Activated CD8-positive, alpha-beta T cell treated with anti-CD3 and anti-CD28 coated beads, Interleukin-2, amount 10 ng/mL, durations not matched to agents 7 days and 5 days (primary cell): ENCODE measurements at regions of chr2 and their contacts with region 1.

Region 1: GRCh38 chr2:30336978-30337841 is 105.9 kb downstream of the LBH start:
- DNase-seq: peak; percentile 76
- ATAC-seq: peak; percentile 94
- H3K4me3 Mint-ChIP-seq: peak overlapping the region; percentile 71
- H3K27ac Mint-ChIP-seq: peak overlapping the region; percentile 97
- H3K4me1 Mint-ChIP-seq: peaks cover 69% of the 10 kb centered on the region
- H3K27me3 Mint-ChIP-seq: no peaks in the 10 kb centered on the region

Region 2: DNA sequence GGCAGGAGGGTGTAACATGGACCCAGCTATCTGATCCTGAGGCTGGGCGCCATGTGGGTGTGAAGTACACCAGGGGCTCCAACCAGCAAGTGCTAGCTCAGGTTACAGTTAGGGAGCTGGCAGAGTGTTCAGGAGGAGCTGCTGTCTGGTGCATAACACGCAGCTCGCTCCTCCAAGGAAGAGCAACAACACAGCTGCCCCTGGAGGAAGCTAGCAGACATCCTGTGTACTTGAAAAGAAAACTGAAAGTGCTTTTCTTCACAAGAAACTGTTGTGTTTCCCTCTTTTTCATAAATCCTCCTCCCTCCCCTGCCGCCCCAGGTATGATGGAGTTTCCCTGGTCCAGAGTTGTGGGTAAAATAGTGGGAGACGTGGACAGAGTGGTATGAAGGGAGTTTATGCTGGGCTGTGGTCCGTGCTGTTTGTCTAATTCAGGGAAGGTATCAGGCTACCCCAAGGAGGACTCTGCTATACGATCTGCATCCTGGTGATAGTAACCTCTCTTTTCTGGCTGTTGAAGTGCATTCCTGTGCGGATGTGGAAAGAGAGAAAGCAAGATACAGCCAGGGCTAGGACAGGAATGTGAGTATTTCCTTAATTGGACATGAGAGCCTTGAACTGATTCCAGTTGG is 112.0 kb before region 1 on chr2:
- CTCF ChIA-PET with region 1: interaction called, 13 read pairs
- POLR2A ChIA-PET with region 1: interaction called, 4 read pairs
- DNase-seq: peak; percentile 70
- ATAC-seq: peak; percentile 88
- H3K4me3 Mint-ChIP-seq: peak overlapping the region; percentile 97
- H3K27ac Mint-ChIP-seq: peak overlapping the region; percentile 99
- H3K4me1 Mint-ChIP-seq: peaks cover 68% of the 10 kb centered on the region
- H3K27me3 Mint-ChIP-seq: peaks cover 2% of the 10 kb centered on the region

Region 3: DNA sequence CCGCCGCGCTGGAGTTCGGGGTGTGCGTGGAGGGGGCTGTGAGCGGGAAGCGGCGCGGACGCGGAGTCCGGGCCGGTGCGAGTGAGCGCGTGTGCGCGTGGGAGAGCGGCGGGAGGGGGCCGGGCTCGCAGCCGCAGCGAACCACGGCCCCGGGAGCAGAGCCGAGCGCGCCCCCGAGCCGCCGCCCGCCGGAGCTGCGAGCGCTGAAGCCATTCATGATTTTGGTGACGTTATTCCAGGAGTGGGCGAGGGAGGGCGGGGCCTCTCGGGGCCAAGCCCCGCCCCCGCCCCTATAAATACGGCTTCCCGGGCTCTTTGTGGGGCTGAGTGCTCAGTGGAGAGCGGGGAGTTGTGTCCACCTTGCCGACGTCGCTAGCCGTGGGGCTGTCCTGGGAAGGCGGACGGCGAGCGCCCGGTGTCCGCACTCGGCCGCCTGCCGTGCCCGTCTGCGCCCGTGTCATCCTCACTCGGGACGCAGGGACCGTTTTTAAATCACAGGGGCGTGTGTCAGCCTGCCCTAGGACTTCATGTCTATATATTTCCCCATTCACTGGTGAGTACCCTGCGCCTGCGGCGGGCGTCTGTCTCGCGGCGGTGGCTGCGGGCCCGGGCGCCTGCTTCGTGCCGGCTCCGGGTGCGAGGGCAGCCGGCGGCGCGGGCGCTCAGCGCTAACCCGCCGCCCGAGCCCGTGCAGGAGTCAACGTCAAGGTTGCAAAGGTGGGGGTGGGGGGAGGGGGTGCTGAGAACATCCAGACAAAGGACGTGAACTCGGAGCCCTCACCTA is 105.8 kb before region 1 on chr2 and contains the start of gene LBH:
- CTCF ChIA-PET with region 1: interaction called, 34 read pairs
- POLR2A ChIA-PET with region 1: interaction called, 13 read pairs
- DNase-seq: peak; percentile 89
- ATAC-seq: peak; percentile 52
- H3K4me3 Mint-ChIP-seq: peak within 1 kb of the TSS; percentile 73
- H3K27ac Mint-ChIP-seq: peak within 1 kb of the TSS; percentile 93
- H3K4me1 Mint-ChIP-seq: peaks cover 64% of the 10 kb centered on the region
- H3K27me3 Mint-ChIP-seq: peaks cover 5% of the 10 kb centered on the region
- total RNA-seq, gene LBH: 97.0 to 100 TPM

Region 4: GRCh38 chr2:30239308-30239985 is 97.8 kb before region 1 on chr2:
- CTCF ChIA-PET with region 1: interaction called, 34 read pairs
- POLR2A ChIA-PET with region 1: interaction called, 3 read pairs
- DNase-seq: peak; percentile 82
- ATAC-seq: peak; percentile 42
- H3K4me3 Mint-ChIP-seq: peak overlapping the region; percentile 46
- H3K27ac Mint-ChIP-seq: peak overlapping the region; percentile 82
- H3K4me1 Mint-ChIP-seq: peaks cover 88% of the 10 kb centered on the region
- H3K27me3 Mint-ChIP-seq: no peaks in the 10 kb centered on the region

Region 5: DNA sequence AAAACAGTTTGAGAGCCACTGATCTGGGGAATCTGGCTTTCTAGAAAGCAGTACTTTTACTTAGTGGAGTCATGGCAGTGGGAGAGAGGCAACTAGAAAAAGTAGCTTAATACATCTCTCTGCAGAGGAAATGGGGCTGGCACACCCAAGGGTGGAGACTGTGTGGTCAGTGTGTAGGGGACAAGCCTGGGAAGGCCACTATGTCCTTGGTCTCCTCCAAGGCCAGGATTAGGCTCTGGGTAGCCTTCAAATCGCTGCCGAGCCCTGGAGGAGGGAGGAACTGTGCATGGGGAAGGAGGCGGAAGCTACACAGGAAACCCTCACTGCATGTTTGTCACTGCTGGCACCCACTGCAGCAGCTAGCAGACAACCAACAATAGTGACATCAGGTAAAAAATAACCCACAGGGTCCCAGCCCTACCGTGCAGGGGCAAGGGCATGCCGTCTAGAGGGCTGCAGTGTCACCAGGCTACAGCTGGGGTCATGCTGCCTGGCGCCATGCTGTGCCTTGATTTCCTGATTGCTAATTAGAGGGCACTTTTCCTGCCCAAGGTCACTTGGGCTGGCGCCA is 71.1 kb before region 1 on chr2:
- CTCF ChIA-PET with region 1: interaction called, 17 read pairs
- POLR2A ChIA-PET with region 1: interaction called, 9 read pairs
- DNase-seq: peak; percentile 76
- ATAC-seq: peak; percentile 85
- H3K4me3 Mint-ChIP-seq: peak overlapping the region; percentile 81
- H3K27ac Mint-ChIP-seq: peak overlapping the region; percentile 98
- H3K4me1 Mint-ChIP-seq: peaks cover 72% of the 10 kb centered on the region
- H3K27me3 Mint-ChIP-seq: no peaks in the 10 kb centered on the region

Region 6: DNA sequence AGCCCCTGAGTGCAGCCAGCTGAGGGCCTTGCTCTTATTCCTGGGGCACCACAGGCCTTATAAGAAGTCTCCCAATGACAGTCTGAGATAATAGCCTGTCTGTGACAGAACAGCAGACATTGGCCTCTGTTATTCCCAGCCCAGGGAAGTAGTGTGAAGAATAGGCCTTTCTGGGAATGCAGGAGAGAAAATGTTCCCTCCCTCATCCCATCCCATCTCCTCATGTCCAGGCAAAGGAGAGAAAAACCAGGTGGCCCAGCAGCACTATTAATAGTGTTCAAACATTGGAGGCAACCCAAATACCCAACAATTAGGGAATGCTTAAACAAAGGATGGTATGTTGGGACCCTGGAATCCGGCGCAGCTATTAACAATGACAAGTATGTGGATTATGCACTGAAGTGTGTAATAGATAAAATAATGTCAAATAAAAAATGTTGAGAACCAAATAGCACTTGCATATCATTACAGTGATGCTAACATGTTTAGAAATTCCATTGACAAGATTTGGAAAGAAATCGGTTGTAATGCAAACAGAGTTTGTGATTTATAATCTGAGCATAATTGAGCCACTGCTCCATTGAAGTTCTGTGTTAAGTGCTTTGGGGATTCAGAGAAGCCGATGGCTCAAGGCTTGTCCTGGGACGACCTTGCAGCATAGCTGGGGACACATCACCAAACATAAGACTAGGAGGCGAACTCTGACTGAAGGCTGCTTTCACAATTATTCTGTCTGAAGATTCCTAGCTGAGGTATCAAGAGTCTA is 36.6 kb before region 1 on chr2:
- CTCF ChIA-PET with region 1: no interaction called
- POLR2A ChIA-PET with region 1: no interaction called
- DNase-seq: no peak
- ATAC-seq: no peak
- H3K4me3 Mint-ChIP-seq: no peak overlapping the region
- H3K27ac Mint-ChIP-seq: no peak overlapping the region
- H3K4me1 Mint-ChIP-seq: no peaks in the 10 kb centered on the region
- H3K27me3 Mint-ChIP-seq: no peaks in the 10 kb centered on the region

Region 7: DNA sequence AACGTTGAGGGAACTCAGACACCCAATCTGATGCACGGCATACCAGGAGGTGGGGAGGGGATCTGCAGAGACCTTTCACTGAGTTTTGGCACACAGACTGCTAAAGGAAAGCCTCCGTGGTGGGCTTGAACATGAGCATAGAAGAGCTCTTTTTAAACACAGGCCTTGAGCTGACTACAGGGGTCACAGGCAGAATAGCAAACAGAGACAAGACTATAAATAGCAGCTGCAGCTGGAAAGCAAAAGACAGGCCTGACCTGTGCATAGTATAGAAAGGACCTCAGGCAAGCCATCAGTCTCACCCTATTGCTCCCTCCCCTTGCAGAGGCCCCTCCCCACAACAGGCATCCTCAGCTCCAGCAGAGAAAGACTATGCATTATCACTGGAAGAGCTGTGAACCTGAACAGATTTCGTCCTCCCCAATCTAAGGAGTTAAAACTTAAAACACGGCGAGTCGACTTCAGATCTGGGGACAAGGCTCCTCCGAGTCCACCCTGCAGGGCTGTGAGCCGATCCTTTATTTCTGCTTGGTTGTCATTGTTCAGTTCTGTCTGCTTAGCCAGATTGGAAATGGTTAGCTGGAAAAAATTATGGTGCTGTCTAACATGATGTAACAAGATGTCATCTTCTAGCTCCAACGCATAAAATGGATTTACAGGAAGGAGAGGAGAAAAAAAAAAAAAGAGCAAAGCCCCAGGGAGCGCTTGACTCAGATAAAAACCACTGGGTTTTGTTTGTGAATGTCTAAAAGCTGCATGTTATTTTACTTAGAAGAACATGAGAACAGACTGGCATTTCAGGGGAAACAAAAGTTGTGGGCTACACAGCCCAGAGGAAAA is 84.6 kb after region 1 on chr2:
- CTCF ChIA-PET with region 1: interaction called, 13 read pairs
- POLR2A ChIA-PET with region 1: interaction called, 6 read pairs
- DNase-seq: peak; percentile 35
- ATAC-seq: peak; percentile 56
- H3K4me3 Mint-ChIP-seq: peak overlapping the region; percentile 36
- H3K27ac Mint-ChIP-seq: peak overlapping the region; percentile 80
- H3K4me1 Mint-ChIP-seq: peaks cover 32% of the 10 kb centered on the region
- H3K27me3 Mint-ChIP-seq: no peaks in the 10 kb centered on the region

Region 8: DNA sequence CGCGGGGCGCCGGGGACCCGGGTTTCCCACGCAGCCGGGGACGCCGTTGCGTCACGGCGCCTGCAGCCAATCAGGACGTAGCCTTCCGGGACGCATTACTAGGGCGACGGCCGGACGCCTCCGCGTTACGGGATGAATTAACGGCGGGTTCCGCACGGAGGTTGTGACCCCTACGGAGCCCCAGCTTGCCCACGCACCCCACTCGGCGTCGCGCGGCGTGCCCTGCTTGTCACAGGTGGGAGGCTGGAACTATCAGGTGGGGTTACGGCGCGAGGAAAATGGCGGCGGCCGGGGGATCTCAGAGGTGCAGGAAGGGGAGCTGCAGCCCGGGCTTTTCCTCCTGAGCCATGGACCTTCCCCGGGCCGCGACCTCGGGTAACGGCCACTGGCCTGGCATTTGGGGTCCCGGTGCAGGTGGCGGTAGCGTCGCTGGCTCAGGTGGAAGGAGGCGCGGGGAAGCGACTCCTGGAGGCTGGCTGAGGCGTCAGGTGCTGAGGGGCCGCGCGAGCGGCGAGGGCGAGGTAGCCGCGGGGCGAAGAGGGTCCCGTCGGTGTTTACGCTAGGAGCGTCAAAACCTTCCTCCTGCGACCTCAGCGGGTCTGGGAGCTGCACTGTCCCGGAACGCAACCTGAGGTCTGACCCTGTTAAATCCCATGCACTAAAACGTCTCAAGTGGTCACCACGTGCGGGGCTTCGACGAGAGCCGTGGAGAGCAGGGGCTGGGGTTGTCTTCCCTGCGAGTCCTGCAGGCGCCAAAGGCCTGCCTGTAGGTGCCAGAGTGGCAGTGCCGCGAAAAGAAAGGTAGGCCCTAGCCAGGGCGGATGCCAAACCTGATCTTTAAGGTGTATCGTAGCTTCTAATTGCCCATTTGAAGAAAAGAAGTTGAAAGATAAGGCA is 110.2 kb after region 1 on chr2 and contains the start of gene LCLAT1:
- CTCF ChIA-PET with region 1: interaction called, 10 read pairs
- POLR2A ChIA-PET with region 1: interaction called, 8 read pairs
- DNase-seq: peak; percentile 86
- ATAC-seq: peak; percentile 95
- H3K4me3 Mint-ChIP-seq: peak within 1 kb of the TSS; percentile 93
- H3K27ac Mint-ChIP-seq: peak within 1 kb of the TSS; percentile 97
- H3K4me1 Mint-ChIP-seq: peaks cover 27% of the 10 kb centered on the region
- H3K27me3 Mint-ChIP-seq: no peaks in the 10 kb centered on the region
- total RNA-seq, gene LCLAT1: 25.1 to 25.3 TPM